Transverse colon (tissue), 4 donors: ENCODE measurements at regions of chr3 and their contacts with region 1.

Region 1: GRCh38 chr3:43453981-43454380 is 167.6 kb downstream of the SNRK start:
- DNase-seq: no peak
- H3K4me3 ChIP-seq: no peak overlapping the region
- H3K27ac ChIP-seq: no peak overlapping the region
- H3K4me1 ChIP-seq: no peaks in the 10 kb centered on the region
- H3K27me3 ChIP-seq: no peaks in the 10 kb centered on the region
- CTCF ChIP-seq: no peak
- EP300 ChIP-seq: no peak
- POLR2A ChIP-seq: no peak

Region 2: DNA sequence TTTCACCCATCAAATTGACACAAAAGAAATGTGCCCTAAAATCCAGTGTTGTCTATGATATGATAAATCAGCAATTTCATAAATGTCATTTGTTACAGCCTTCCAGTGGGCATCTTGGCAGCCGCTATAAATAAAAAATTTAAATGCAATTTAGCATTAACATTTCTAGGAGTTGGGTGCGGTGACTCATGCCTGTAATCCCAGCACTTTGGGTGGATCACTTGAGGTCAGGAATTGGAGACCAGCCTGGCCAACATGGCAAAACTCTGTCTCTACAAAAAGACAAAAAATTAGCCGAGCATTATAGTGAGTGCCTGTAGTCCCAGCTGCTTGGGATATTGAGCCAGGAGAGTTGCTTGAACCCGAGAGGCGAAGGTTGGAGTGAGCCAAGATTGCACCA is 282.2 kb before region 1 on chr3:
- in situ Hi-C with region 1: no loop called
- intact Hi-C with region 1: no loop called
- DNase-seq: no peak
- H3K4me3 ChIP-seq: no peak overlapping the region
- H3K27ac ChIP-seq: no peak overlapping the region
- H3K4me1 ChIP-seq: no peaks in the 10 kb centered on the region
- H3K27me3 ChIP-seq: no peaks in the 10 kb centered on the region
- CTCF ChIP-seq: no peak
- EP300 ChIP-seq: no peak
- POLR2A ChIP-seq: no peak

Region 3: GRCh38 chr3:43477600-43477999 is 23.6 kb after region 1 on chr3:
- in situ Hi-C with region 1: no loop called
- intact Hi-C with region 1: loop called (anchors 1 kb)
- DNase-seq: peak; percentile 13
- H3K4me3 ChIP-seq: no peak overlapping the region
- H3K27ac ChIP-seq: no peak overlapping the region
- H3K4me1 ChIP-seq: no peaks in the 10 kb centered on the region
- H3K27me3 ChIP-seq: no peaks in the 10 kb centered on the region
- CTCF ChIP-seq: no peak
- EP300 ChIP-seq: no peak
- POLR2A ChIP-seq: no peak